ENCODE measurements at regions of chr9 and their contacts with region 1.

Region 1: DNA sequence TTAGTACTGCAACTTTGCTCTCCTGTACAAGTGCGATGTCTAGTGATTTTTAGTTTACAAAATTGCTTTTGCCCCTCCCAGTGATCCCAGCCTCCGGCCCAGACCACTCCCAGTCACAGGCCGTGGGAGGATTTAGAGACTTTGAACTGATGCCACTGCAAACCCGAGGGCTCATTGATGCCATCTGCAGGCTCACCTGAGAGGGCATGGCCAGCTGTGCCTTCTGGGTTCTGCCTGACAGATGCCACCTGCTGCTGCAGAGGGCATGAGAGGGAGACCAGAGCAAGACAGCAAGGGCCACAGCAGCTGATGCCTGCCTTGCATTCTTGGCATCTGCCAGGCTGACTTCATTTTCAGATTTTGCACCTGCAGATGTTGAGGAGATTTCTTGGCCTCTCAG is 593.8 kb downstream of the CDK5RAP2 start:
- DNase-seq: no peak

Region 2: DNA sequence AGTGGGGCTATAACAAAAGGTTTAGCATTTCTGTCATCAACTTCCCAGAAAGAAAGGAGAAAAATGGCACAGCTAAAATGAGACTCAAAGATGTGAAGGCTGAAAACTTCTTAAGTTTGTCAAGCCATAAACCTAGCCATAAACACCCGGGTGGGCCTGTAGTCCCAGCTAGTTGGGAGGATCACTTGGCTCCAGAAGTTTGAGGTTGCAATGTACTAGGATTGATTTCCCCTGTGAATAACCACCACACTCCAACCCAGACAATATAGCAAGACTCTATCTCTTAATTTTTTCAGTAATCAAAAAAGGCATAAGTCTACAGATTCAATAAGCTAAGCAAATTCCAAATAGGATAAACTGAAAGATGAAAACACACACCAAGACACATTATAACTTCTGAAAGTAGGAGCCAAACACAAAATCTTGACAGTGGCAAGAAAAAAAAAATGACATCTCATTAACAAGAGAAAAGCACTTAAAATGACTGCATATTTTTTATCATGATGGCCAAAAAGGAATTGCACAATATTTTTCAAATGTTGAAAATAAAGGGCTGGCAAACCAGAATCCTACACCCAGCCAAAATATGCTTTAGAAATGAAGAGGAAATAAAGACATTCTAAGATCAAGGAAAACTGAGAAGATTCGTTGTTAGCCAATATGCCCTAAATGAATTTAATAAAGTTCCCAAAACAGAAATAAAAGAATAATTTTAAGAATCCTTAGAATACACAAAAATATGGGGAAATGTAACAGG is 925.4 kb before region 1 on chr9:
- intact Hi-C with region 1: loop called in 1 of 2 experiments (anchors 5 kb)
- DNase-seq: no peak